GM13976 (cell line): ENCODE measurements at regions of chr20 and their contacts with region 1.

Region 1: DNA sequence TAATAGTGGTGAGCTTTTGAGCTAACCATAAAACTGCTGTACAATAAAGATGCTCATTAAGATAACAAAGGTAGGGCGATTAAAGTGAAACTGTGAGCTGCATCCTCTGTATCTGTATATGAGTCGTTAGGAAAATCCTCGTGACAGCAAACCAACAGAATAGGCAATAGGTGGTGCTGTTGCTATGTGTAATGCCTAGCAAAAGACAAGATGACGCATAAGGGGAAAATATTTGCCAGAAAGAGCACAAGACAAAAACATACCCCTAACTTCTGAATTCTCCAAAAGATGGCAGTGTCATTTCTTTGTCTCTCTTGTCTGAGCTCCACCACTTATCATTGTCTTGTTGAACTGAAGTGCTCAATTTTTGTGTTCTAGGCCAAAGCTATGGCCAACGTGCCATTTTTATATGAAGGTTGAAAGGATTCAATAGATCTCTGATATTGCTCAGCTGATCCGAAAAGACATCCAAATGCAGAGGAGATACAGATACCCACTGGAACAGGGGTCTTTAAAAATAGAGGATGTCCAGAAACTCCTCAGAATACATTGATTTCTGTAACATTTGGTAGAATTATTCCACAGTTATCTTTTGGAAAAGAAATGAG is 56.3 kb upstream of the ANKEF1 start:
- DNase-seq: peak; percentile 58
- CTCF ChIP-seq: peak; percentile 67

Region 2: GRCh38 chr20:10090588-10091166 is 112.2 kb after region 1 on chr20:
- in situ Hi-C with region 1: loop called (anchors 10 kb)
- DNase-seq: peak; percentile 18
- CTCF ChIP-seq: peak; percentile 33

Region 3: GRCh38 chr20:10201321-10201870 is 222.9 kb after region 1 on chr20:
- in situ Hi-C with region 1: no loop called
- DNase-seq: no peak
- CTCF ChIP-seq: no peak